ENCODE measurements at regions of chr4 and their contacts with region 1.

Region 1: GRCh38 chr4:86544310-86544966 is 49.7 kb upstream of the PTPN13 start:
- DNase-seq: peak; percentile 75
- H3K4me3 Mint-ChIP-seq: peak overlapping the region; percentile 53
- H3K27ac Mint-ChIP-seq: peak overlapping the region; percentile 78
- H3K4me1 Mint-ChIP-seq: peaks cover 31% of the 10 kb centered on the region
- H3K27me3 Mint-ChIP-seq: peaks cover 10% of the 10 kb centered on the region

Region 2: GRCh38 chr4:86593688-86594558 is 49.5 kb after region 1 on chr4 and contains the start of gene PTPN13:
- intact Hi-C with region 1: loop called (anchors 2 kb)
- DNase-seq: peak; percentile 82
- H3K4me3 Mint-ChIP-seq: peak within 1 kb of the TSS; percentile 81
- H3K27ac Mint-ChIP-seq: peak within 1 kb of the TSS; percentile 48
- H3K4me1 Mint-ChIP-seq: peaks cover 15% of the 10 kb centered on the region
- H3K27me3 Mint-ChIP-seq: peaks cover 51% of the 10 kb centered on the region
- total RNA-seq, gene PTPN13: 0.12 and 0.26 TPM in 2 replicates

Region 3: GRCh38 chr4:87108142-87108546 is 563.7 kb after region 1 on chr4:
- intact Hi-C with region 1: loop called (anchors 5 kb)
- DNase-seq: no peak
- H3K4me3 Mint-ChIP-seq: no peak overlapping the region
- H3K27ac Mint-ChIP-seq: no peak overlapping the region
- H3K4me1 Mint-ChIP-seq: peaks cover 22% of the 10 kb centered on the region
- H3K27me3 Mint-ChIP-seq: no peaks in the 10 kb centered on the region

Region 4: DNA sequence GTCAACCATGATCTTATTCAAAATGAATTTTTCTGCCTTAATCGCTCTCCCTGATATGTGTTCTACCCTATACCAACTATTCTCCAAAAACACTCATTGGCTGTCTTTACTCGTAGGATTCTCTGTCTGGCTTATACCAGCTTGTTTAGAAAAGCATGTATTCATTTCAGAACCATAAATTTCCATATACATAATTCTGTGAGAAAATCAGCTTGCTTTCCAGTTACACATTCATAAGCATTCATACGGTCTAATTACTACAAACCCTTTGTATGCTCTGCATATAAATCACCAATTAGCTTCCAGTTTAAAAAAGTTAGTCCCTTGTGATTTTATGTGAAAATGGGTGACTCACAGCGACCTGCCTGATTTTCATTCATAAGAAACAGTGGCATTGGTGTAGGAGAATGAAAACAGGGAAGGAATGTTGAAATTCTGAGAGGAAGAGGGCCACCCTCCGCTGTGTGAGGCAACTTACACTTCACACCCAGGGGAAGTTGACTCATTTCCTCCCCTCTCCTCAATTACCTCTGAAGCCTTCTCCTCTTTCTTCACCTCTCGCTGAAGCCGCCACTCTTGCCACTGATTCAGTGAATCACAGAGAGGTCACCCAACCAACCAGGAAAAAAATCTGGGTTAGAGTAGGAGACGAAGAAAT is 1351.7 kb after region 1 on chr4:
- intact Hi-C with region 1: no loop called
- DNase-seq: peak; percentile 63
- H3K4me3 Mint-ChIP-seq: no peak overlapping the region
- H3K27ac Mint-ChIP-seq: peak overlapping the region; percentile 5
- H3K4me1 Mint-ChIP-seq: peaks cover 11% of the 10 kb centered on the region
- H3K27me3 Mint-ChIP-seq: peaks cover 30% of the 10 kb centered on the region